ENCODE measurements at regions of chr15 and their contacts with region 1.

Region 1: GRCh38 chr15:89416141-89416853 is 80.1 kb downstream of the RHCG start:
- DNase-seq: peak; percentile 91
- H3K4me3 Mint-ChIP-seq: no peak overlapping the region
- H3K27ac Mint-ChIP-seq: peak overlapping the region; percentile 9
- H3K4me1 Mint-ChIP-seq: peaks cover 10% of the 10 kb centered on the region
- H3K27me3 Mint-ChIP-seq: peaks cover 72% of the 10 kb centered on the region

Region 2: GRCh38 chr15:89430530-89431341 is 14.4 kb after region 1 on chr15:
- intact Hi-C with region 1: loop called (anchors 1 kb)
- DNase-seq: peak; percentile 97
- H3K4me3 Mint-ChIP-seq: peak overlapping the region; percentile 84
- H3K27ac Mint-ChIP-seq: no peak overlapping the region
- H3K4me1 Mint-ChIP-seq: peaks cover 4% of the 10 kb centered on the region
- H3K27me3 Mint-ChIP-seq: peaks cover 31% of the 10 kb centered on the region